Mammary epithelial cell (primary cell): ENCODE measurements at regions of chr15 and their contacts with region 1.

Region 1: DNA sequence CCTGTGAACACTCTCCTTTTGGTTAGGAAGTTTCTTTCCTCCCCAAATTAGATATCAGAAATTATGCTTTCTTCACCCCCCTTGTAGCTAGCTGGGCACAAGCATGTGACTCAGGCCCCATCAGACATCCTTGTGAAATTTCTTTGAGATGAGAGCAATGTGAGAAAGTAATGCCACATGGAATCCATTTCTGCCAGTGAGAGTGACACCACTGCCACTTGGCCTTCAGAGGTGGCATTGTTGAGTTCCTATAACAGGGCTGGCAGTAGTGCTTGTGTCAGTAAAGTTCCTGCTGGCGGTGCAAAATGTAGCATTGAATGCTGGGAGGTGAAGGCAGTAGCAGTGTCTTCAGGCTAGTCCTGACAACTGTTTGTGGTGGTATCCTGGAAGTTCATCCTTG is 80.7 kb upstream of the ZNF280D start:
- DNase-seq: no peak
- H3K4me3 ChIP-seq: no peak overlapping the region
- H3K27ac ChIP-seq: no peak overlapping the region
- H3K4me1 ChIP-seq: peaks cover 15% of the 10 kb centered on the region
- H3K27me3 ChIP-seq: no peaks in the 10 kb centered on the region
- CTCF ChIP-seq: no peak

Region 2: GRCh38 chr15:56772868-56773639 is 40.9 kb before region 1 on chr15:
- CTCF ChIA-PET with region 1: no interaction called
- dilution Hi-C with region 1: loop called (anchors 5 kb)
- in situ Hi-C with region 1: no loop called
- intact Hi-C with region 1: no loop called
- DNase-seq: no peak
- H3K4me3 ChIP-seq: no peak overlapping the region
- H3K27ac ChIP-seq: no peak overlapping the region
- H3K4me1 ChIP-seq: no peaks in the 10 kb centered on the region
- H3K27me3 ChIP-seq: no peaks in the 10 kb centered on the region
- CTCF ChIP-seq: no peak